ENCODE measurements at regions of chr7 and their contacts with region 1.

Region 1: DNA sequence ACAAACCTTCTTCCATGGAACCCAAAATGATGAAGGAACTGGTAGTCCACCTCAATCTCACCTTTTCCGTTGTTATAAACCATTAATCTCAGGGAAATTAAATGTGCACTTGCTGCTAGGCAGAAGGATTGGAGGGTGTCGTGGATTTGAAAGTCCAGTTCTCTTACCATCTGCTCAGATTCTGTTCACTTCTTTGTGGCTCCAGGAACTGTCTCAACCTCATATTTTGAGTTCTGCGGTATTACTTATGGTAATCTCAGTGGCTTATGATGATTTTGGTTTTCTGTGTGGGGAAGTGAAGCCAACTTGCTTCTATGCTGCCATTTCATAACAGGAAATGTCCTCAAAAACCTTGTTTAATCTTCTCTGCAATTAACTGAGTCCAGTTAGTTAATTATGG is 136.4 kb downstream of the CDC14C start:
- DNase-seq: no peak
- H3K4me3 ChIP-seq: no peak overlapping the region
- H3K27ac ChIP-seq: no peak overlapping the region
- H3K4me1 ChIP-seq: no peaks in the 10 kb centered on the region
- H3K27me3 ChIP-seq: no peaks in the 10 kb centered on the region
- CTCF ChIP-seq: no peak
- EP300 ChIP-seq: no peak
- POLR2A ChIP-seq: no peak

Region 2: DNA sequence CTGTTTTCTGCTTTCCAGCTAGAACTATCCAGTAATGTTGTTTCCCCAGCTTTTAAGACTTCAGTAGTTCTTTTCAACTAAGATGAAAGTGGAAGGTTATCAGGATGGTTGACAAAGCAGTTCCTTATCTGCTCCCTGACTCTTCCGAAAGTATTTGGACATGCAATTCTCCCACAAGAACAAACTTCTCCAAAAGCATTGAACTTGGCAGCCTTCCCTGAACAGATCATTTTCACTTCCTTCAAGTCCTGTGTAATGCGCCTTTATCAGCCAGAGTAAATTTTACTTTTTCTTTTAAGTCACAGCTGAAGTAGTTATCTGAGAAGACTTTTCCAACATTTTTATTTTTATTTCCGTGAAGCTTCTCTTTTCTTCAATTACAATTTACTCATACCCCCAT is 96.7 kb before region 1 on chr7:
- intact Hi-C with region 1: no loop called
- DNase-seq: no peak
- H3K4me3 ChIP-seq: no peak overlapping the region
- H3K27ac ChIP-seq: no peak overlapping the region
- H3K4me1 ChIP-seq: no peaks in the 10 kb centered on the region
- H3K27me3 ChIP-seq: no peaks in the 10 kb centered on the region
- CTCF ChIP-seq: no peak
- EP300 ChIP-seq: no peak
- POLR2A ChIP-seq: no peak

Region 3: GRCh38 chr7:49346195-49346899 is 285.6 kb after region 1 on chr7:
- intact Hi-C with region 1: loop called in 1 of 4 experiments (anchors 10 kb)
- DNase-seq: no peak
- H3K4me3 ChIP-seq: no peak overlapping the region
- H3K27ac ChIP-seq: no peak overlapping the region
- H3K4me1 ChIP-seq: no peaks in the 10 kb centered on the region
- H3K27me3 ChIP-seq: no peaks in the 10 kb centered on the region
- CTCF ChIP-seq: no peak
- EP300 ChIP-seq: no peak
- POLR2A ChIP-seq: no peak